ENCODE measurements at regions of chr1 and their contacts with region 1.

Region 1: GRCh38 chr1:207963427-207964194 is 52.7 kb upstream of the CD34 start:
- DNase-seq: peak; percentile 94 to 100 (median 100)
- ATAC-seq: peak; percentile 96
- H3K4me3 ChIP-seq: peak overlapping the region; percentile 25
- H3K27ac ChIP-seq: peak overlapping the region; percentile 69
- H3K4me1 ChIP-seq: peaks cover 19 to 24% of the 10 kb centered on the region in 2 experiments
- H3K27me3 ChIP-seq: peaks cover 0 to 6% of the 10 kb centered on the region in 2 experiments; a peak in 1 of 5 replicates
- CTCF ChIP-seq: peak; percentile 98 to 99 (median 99)
- EP300 ChIP-seq: peak; percentile 4; the same call in 1 of the 2 replicates
- POLR2A ChIP-seq: peak; percentile 92
- RAD21 ChIP-seq: peak; percentile 100

Region 2: GRCh38 chr1:207811920-207812720 is 151.5 kb before region 1 on chr1:
- CTCF ChIA-PET with region 1: no interaction called
- POLR2A ChIA-PET with region 1: interaction called, 4 read pairs
- in situ Hi-C with region 1: no loop called
- intact Hi-C with region 1: loop called (anchors 2 kb)
- DNase-seq: peak; percentile 75 to 79 (median 78)
- ATAC-seq: peak; percentile 90
- H3K4me3 ChIP-seq: no peak overlapping the region
- H3K27ac ChIP-seq: no peak overlapping the region
- H3K4me1 ChIP-seq: peaks cover 34 to 60% of the 10 kb centered on the region in 2 experiments
- H3K27me3 ChIP-seq: no peaks in the 10 kb centered on the region
- CTCF ChIP-seq: peak; percentile 85 to 88 (median 85)
- EP300 ChIP-seq: no peak
- POLR2A ChIP-seq: no peak
- RAD21 ChIP-seq: peak; percentile 71 to 82

Region 3: GRCh38 chr1:207885129-207886032 is 78.2 kb before region 1 on chr1:
- CTCF ChIA-PET with region 1: interaction called, 42 read pairs
- POLR2A ChIA-PET with region 1: interaction called, 4 read pairs
- in situ Hi-C with region 1: no loop called
- intact Hi-C with region 1: loop called (anchors 1 kb)
- DNase-seq: peak; percentile 88 to 92 (median 90)
- ATAC-seq: peak; percentile 96
- H3K4me3 ChIP-seq: no peak overlapping the region
- H3K27ac ChIP-seq: no peak overlapping the region
- H3K4me1 ChIP-seq: peaks cover 21 to 35% of the 10 kb centered on the region in 2 experiments; a peak in 4 of 5 replicates
- H3K27me3 ChIP-seq: no peaks in the 10 kb centered on the region
- CTCF ChIP-seq: peak; percentile 94 to 99 (median 97)
- EP300 ChIP-seq: peak; percentile 35; the same call in 1 of the 2 replicates
- POLR2A ChIP-seq: no peak
- RAD21 ChIP-seq: peak; percentile 97 to 98

Region 4: DNA sequence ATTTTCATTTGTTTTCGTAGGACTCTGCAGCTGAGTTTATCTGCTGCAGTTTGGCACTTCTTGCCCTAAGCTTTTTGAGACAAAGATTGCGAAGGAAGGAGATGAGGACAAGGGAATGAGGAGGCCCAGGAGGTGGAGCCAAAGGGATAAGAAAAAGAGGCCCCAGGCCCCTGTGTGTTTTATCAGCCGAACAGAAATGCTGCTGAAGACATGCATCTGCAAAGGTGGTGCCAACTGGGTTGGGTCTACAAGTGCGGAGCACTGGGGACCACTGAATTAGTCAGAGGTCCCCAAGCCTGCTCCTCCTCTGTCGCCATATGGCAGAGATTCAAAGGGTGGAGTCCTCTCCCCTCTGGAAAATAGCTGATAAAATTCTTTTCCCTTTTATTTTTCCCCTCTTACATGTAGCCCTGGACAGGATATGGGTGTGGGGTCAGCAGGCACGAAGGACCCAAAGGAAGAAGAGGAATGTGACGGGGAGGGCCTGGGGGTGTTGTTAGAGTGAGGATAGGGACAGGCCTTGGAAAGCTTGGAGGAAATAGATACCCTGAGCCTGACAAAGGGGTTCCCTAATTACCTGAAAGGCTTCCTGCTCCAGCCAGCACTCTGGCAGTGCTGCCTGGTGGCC is 55.4 kb before region 1 on chr1:
- CTCF ChIA-PET with region 1: interaction called, 18 read pairs
- POLR2A ChIA-PET with region 1: interaction called, 3 read pairs
- in situ Hi-C with region 1: no loop called
- intact Hi-C with region 1: loop called (anchors 1 kb)
- DNase-seq: peak in 2 of 4 experiments; percentile 51 to 57
- ATAC-seq: peak; percentile 74
- H3K4me3 ChIP-seq: no peak overlapping the region
- H3K27ac ChIP-seq: no peak overlapping the region
- H3K4me1 ChIP-seq: peaks cover 11 to 18% of the 10 kb centered on the region in 2 experiments; a peak in 4 of 5 replicates
- H3K27me3 ChIP-seq: 0 out of 5 replicates have a peak, but pooled peaks cover 2 to 11% of the 10 kb centered on the region in 2 experiments
- CTCF ChIP-seq: peak; percentile 29 to 59 (median 48); a peak in 4 of 6 replicates
- EP300 ChIP-seq: no peak
- POLR2A ChIP-seq: no peak
- RAD21 ChIP-seq: peak; percentile 77 to 82